ENCODE measurements at regions of chr15 and their contacts with region 1.

Region 1: GRCh38 chr15:44593042-44593736 is 56.2 kb downstream of the EIF3J start:
- DNase-seq: peak; percentile 20
- H3K4me3 Mint-ChIP-seq: no peak overlapping the region
- H3K27ac Mint-ChIP-seq: peak overlapping the region; percentile 37
- H3K4me1 Mint-ChIP-seq: peaks cover 34% of the 10 kb centered on the region
- H3K27me3 Mint-ChIP-seq: no peaks in the 10 kb centered on the region

Region 2: GRCh38 chr15:44516436-44516835 is 76.8 kb before region 1 on chr15:
- CTCF ChIA-PET with region 1: no interaction called
- POLR2A ChIA-PET with region 1: no interaction called
- DNase-seq: no peak
- H3K4me3 Mint-ChIP-seq: no peak overlapping the region
- H3K27ac Mint-ChIP-seq: no peak overlapping the region
- H3K4me1 Mint-ChIP-seq: peaks cover 5% of the 10 kb centered on the region
- H3K27me3 Mint-ChIP-seq: no peaks in the 10 kb centered on the region

Region 3: GRCh38 chr15:44573386-44573785 is 19.8 kb before region 1 on chr15:
- CTCF ChIA-PET with region 1: interaction called, 10 read pairs
- POLR2A ChIA-PET with region 1: interaction called, 4 read pairs
- DNase-seq: no peak
- H3K4me3 Mint-ChIP-seq: no peak overlapping the region
- H3K27ac Mint-ChIP-seq: no peak overlapping the region
- H3K4me1 Mint-ChIP-seq: peaks cover 15% of the 10 kb centered on the region
- H3K27me3 Mint-ChIP-seq: no peaks in the 10 kb centered on the region

Region 4: DNA sequence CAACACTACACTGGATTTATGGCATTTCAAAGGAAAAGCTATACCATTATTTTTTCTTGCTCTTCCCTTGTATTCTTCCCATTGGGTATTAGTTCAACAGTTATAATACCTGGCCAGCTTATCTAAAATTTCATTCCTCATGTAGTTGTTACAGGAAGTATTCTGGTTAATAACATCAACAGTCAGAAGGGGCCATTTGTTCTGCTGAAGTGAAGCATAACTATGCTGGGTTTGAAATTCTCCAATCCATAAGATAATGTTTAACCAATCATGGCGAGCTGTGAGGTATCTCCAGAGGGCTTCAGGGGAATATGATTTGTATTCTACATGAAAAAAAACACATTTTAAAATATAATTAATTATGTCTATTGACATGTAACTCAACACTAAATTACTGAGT is 26.9 kb after region 1 on chr15:
- CTCF ChIA-PET with region 1: no interaction called
- POLR2A ChIA-PET with region 1: no interaction called
- DNase-seq: no peak
- H3K4me3 Mint-ChIP-seq: no peak overlapping the region
- H3K27ac Mint-ChIP-seq: no peak overlapping the region
- H3K4me1 Mint-ChIP-seq: peaks cover 4% of the 10 kb centered on the region
- H3K27me3 Mint-ChIP-seq: no peaks in the 10 kb centered on the region

Region 5: DNA sequence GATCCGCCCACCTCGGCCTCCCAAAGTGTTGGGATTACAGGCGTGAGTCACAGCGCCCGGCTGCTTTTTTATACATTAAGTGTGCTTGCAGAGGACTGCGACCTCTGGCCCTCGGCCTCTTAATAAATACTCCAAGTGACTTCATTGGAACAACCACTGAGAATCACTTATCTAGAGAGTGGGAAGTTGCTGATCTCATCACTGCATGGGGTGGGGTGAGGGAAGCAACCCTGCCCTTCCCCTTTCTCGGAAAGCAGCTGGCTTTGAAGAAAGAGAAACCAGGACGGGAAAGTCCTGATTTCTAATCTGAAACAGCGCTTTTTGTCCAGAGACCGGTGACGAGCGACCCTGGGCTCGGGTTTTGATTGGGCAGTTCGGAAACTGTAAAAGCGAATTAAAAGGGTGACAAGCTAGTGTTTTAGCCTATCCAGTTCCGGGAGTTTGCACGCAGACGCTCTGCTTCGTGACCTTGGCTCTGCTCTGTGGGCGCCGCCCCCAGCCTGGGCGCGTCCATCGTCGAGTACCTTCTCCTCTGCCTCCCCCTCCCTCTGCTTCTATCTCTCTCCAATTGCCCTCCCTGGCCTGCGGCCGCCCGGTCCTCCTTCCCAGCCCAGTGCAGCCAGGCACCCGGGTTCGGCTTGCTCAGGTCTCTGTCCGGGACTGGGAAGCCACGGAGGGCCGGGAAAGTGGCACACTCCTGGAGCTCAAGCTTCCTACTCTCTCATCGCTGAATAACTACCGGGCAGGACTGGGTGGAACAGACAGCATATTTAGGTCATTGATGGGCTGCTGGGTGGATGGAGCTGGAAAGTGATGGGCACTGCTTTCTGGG is 135.6 kb after region 1 on chr15:
- CTCF ChIA-PET with region 1: interaction called, 3 read pairs
- POLR2A ChIA-PET with region 1: interaction called, 22 read pairs
- DNase-seq: peak; percentile 97
- H3K4me3 Mint-ChIP-seq: peak overlapping the region; percentile 99
- H3K27ac Mint-ChIP-seq: peak overlapping the region; percentile 100
- H3K4me1 Mint-ChIP-seq: peaks cover 69% of the 10 kb centered on the region
- H3K27me3 Mint-ChIP-seq: no peaks in the 10 kb centered on the region